T-cell (primary cell): ENCODE measurements at regions of chr18 and their contacts with region 1.

Region 1: DNA sequence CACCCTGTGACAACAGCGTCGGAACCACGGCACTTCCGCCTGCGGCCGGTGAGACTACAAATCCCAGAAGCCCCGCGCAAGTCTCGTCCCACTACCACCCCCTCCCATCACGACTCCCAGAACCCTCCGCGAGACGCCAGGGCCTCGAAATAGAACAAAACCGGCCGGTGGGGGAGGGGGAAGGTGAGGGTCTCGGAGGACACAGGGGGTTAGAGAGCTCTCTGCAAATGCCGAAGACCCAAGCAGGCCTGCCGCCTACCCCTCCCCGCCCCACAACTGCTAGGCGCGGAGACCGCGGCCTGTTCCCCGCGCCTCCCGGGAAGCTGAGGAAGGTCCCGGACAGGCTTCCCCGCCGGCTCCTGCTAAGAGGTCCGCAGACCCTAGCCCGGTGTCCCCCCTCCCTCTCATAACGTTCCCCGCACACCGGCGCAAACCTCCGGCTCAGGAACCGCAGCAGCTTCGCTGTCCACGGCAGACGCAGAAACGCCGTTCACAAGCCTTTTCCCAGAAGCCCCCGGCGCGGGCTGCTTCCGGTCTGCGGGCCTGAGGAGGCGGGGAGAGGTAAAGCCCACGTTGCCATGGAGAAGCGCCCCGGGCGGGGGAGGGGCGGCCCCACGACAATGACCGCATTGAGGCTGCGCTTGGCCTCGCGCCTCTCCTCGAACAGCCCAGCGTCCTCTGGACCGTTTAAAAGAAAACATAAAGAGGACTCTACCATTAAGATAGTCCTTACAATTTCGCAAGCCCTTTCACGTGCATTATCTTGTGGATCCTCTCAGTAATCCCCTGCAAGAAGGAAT is at the start of gene ZNF24:
- DNase-seq: peak; percentile 81 to 94 (median 89)
- ATAC-seq: peak; percentile 90 to 94 (median 91)
- H3K4me3 ChIP-seq: peak within 1 kb of the TSS; percentile 79 to 92
- H3K4me3 Mint-ChIP-seq: peak within 1 kb of the TSS; percentile 92 to 96 (median 95)
- H3K27ac ChIP-seq: peak within 1 kb of the TSS; percentile 97
- H3K27ac Mint-ChIP-seq: peak within 1 kb of the TSS; percentile 92 to 97
- H3K4me1 ChIP-seq: peaks cover 14 to 18% of the 10 kb centered on the region in 2 experiments
- H3K4me1 Mint-ChIP-seq: peaks cover 50 to 56% (median 56%) of the 10 kb centered on the region in 3 donors
- H3K27me3 ChIP-seq: no peaks in the 10 kb centered on the region
- H3K27me3 Mint-ChIP-seq: no peaks in the 10 kb centered on the region
- total RNA-seq, gene ZNF24: 63.1 to 75.7 (median 72.2) TPM

Region 2: GRCh38 chr18:35253655-35254287 is 90.4 kb before region 1 on chr18:
- CTCF ChIA-PET with region 1: no interaction called
- POLR2A ChIA-PET with region 1: no interaction called
- DNase-seq: no peak
- ATAC-seq: no peak
- H3K4me3 ChIP-seq: no peak overlapping the region
- H3K4me3 Mint-ChIP-seq: no peak overlapping the region
- H3K27ac ChIP-seq: no peak overlapping the region
- H3K27ac Mint-ChIP-seq: no peak overlapping the region
- H3K4me1 ChIP-seq: no peaks in the 10 kb centered on the region
- H3K4me1 Mint-ChIP-seq: no peaks in the 10 kb centered on the region
- H3K27me3 ChIP-seq: no peaks in the 10 kb centered on the region
- H3K27me3 Mint-ChIP-seq: no peaks in the 10 kb centered on the region

Region 3: DNA sequence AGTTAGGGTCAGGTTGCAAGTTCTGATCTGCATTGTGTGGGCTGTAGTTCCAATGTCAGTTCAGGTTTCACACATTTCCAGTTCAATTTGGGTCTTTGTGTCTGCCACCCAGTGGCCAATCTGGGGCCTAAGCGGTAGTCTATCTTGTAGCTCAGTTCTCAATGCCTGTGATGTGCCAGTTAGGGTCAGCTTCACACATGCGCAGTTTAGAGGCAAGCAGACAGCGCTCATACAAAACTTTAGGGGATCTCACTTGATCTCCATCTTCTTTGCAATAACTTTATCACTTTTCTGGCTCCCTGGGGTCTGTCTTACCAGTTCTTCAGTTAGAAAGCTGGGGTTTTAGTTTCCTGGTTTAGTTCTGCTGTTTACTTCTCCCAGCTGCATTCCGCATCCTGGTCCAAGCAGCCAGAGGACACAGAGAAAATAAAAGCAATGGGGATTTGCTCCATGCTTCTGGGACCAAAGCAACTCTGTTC is 11.0 kb after region 1 on chr18:
- CTCF ChIA-PET with region 1: interaction called, 3 to 13 read pairs
- POLR2A ChIA-PET with region 1: interaction called in 1 of 2 experiments, 6 read pairs
- DNase-seq: peak; percentile 24 to 78 (median 54)
- ATAC-seq: peak; percentile 81 to 98 (median 94)
- H3K4me3 ChIP-seq: no peak overlapping the region
- H3K4me3 Mint-ChIP-seq: no peak overlapping the region
- H3K27ac ChIP-seq: no peak overlapping the region
- H3K27ac Mint-ChIP-seq: no peak overlapping the region
- H3K4me1 ChIP-seq: no peaks in the 10 kb centered on the region
- H3K4me1 Mint-ChIP-seq: peaks cover 0 to 3% (median 0%) of the 10 kb centered on the region in 3 donors
- H3K27me3 ChIP-seq: peaks cover 0 to 3% of the 10 kb centered on the region in 2 experiments
- H3K27me3 Mint-ChIP-seq: no peaks in the 10 kb centered on the region